ENCODE measurements at regions of chr11 and their contacts with region 1.

Region 1: GRCh38 chr11:1309498-1310317 is at the start of gene TOLLIP:
- DNase-seq: peak; percentile 87 to 98 (median 94)
- H3K4me3 ChIP-seq: peak within 1 kb of the TSS; percentile 47 to 100 (median 90)
- H3K27ac ChIP-seq: peak within 1 kb of the TSS; percentile 56 to 99 (median 96)
- H3K27me3 ChIP-seq: no peaks in the 10 kb centered on the region
- CTCF ChIP-seq: peak; percentile 26 to 86 (median 69)
- total RNA-seq, gene TOLLIP: 129 to 348 (median 261) TPM

Region 2: GRCh38 chr11:942823-943222 is 366.9 kb before region 1 on chr11:
- intact Hi-C with region 1: no loop called
- DNase-seq: peak in 3 of 10 donors; percentile 58 to 70 (median 64)
- H3K4me3 ChIP-seq: peak overlapping the region in 2 of 59 donors; percentile 12 to 13
- H3K27ac ChIP-seq: peak overlapping the region in 22 of 59 donors; percentile 1 to 74 (median 42)
- H3K27me3 ChIP-seq: no peaks in the 10 kb centered on the region
- CTCF ChIP-seq: no peak

Region 3: DNA sequence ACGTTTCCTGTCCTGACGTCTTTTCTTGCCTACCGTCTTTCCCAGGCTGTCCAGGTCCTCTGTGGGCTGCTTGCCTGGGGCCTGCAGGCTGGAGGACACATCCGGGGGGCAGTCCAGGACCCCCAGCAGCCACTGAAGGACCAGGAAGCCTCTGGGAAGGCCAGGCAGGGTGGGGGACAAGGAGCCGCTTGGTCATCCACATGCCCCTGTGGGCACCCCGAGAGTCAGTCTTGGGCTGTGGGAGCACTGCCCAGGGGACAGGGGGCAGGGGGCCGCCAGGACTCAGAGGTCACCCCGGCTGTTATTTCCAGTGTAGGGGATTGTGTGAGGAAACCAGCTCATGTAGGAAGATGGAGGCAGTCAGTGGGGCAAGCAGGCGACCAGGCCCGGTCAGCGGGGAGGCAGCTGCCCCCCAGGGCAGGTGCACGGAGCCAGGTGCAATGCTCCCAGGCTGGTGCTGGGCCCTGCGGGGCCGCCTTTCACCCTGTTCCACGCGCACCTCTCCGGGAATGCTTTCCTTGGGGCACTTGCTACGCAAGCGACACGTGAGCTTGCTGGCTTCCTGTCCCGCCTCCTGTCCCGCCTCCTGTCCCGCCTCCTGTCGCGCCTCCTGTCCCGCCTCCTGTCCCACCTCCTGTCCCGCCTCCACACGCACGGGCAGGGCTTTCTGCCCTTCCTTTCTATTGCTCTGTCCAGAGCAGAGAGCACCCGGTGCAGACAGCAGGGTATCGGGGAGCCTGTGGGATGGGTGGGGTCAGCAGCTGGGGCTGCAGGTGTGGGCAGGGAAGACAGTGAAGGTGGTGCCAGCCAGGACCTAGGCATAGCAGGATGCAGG is 47.3 kb before region 1 on chr11:
- intact Hi-C with region 1: loop called in 1 of 2 experiments (anchors 5 kb)
- DNase-seq: peak; percentile 91 to 98 (median 96)
- H3K4me3 ChIP-seq: peak overlapping the region; percentile 38 to 97 (median 68)
- H3K27ac ChIP-seq: peak overlapping the region in 56 of 59 donors; percentile 4 to 92 (median 78)
- H3K27me3 ChIP-seq: no peaks in the 10 kb centered on the region
- CTCF ChIP-seq: peak in 7 of 56 donors; percentile 8 to 24 (median 14)

Region 4: GRCh38 chr11:1401656-1402221 is 92.0 kb after region 1 on chr11:
- intact Hi-C with region 1: loop called in 1 of 2 experiments (anchors 5 kb)
- DNase-seq: peak; percentile 19 to 84 (median 74)
- H3K4me3 ChIP-seq: peak overlapping the region in 45 of 59 donors; percentile 1 to 47 (median 25)
- H3K27ac ChIP-seq: peak overlapping the region in 48 of 59 donors; percentile 6 to 99 (median 72)
- H3K27me3 ChIP-seq: no peaks in the 10 kb centered on the region
- CTCF ChIP-seq: peak in 14 of 56 donors; percentile 7 to 30 (median 15)

Region 5: DNA sequence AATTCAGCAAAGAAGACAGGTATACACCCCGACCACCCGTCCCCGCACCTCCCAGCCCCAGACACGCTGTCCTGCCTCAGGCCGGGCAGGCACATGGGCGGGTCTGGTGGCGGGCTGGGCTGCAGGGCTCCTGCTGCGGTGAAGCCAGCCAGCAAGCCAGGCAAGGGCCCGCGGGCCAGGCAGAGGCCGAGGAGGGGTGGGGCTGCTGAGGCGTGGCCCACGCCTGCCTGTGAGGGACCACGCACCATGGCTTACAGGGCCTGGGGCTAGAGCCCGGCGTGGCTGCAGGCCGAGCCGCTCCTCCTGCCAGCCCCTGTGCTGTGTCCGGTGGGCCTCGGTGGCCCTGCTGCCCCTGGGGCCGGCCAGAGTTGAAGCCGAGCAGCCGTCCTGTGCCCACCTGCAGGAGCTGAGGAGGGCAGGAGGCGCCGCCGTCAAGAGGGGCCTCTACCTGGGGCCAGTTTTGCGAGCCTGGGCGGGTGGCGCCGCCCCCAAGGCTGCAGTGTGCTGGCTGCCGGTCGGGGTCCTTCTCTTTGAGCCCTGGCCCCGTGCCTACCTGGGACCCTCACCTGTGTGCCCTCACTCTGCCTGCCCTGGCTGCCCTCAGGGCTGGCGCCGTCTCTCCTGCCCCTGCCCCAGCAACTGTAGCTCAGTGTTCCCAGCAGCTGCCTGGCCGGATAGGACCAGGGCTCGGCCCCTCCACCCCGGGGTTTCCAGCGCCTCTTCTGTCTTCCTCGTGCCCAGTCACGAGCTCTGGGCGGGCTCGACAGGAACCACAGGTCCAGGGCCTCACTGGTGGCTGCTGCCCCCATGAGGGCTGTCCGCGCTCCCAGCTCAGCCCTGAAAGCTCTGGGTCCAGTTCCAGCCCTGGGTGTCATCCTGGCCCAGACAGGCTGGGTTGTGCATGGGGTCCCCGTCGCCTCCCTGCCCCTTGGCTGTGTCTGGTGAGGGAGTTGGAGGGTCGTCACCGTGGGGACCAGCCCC is 138.4 kb after region 1 on chr11:
- intact Hi-C with region 1: loop called (anchors 5 kb)
- DNase-seq: peak in 9 of 10 donors; percentile 55 to 76 (median 71)
- H3K4me3 ChIP-seq: no peak overlapping the region
- H3K27ac ChIP-seq: peak overlapping the region in 57 of 59 donors; percentile 11 to 84 (median 70)
- H3K27me3 ChIP-seq: no peaks in the 10 kb centered on the region
- CTCF ChIP-seq: peak in 51 of 56 donors; percentile 26 to 69 (median 50)

Measured in dorsolateral prefrontal cortex (tissue), 120 donors.